Calu3 (cell line): ENCODE measurements at regions of chr5 and their contacts with region 1.

Region 1: GRCh38 chr5:159987031-159987674 is 21.8 kb upstream of the TTC1 start:
- DNase-seq: peak; percentile 95
- H3K4me3 Mint-ChIP-seq: peak overlapping the region; percentile 77
- H3K27ac Mint-ChIP-seq: no peak overlapping the region
- H3K4me1 Mint-ChIP-seq: peaks cover 4% of the 10 kb centered on the region
- H3K27me3 Mint-ChIP-seq: peaks cover 11% of the 10 kb centered on the region
- CTCF ChIP-seq: peak; percentile 83

Region 2: DNA sequence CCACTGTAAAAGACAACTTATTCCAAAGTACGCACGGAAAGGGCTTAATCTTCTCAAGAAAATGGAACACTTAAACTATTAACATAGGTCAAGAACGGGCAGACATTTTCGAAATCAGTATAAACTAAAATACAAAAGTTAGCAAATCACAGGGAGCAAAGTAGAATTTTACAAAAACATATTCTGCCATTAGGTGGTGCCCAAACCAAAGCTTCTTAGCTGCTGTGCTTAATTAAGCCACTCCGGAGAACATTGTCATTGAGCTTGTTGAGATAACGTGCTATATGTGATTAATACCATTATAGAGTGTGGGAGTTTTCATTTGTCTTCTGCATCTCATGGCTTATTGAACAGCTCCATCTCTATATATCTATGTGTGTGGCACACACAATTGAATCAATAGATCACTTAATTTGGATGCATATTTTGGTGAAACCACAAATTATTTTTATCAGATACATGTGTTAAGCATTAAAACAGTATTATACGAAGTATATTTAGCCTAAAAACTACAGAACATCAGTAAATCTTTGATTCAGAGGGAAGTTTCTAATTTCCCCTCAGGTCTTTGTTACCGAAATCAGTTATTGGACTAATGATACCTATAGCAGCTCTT is 700.6 kb before region 1 on chr5:
- CTCF ChIA-PET with region 1: interaction called, 6 read pairs
- intact Hi-C with region 1: loop called (anchors 1 kb)
- DNase-seq: peak; percentile 11
- H3K4me3 Mint-ChIP-seq: no peak overlapping the region
- H3K27ac Mint-ChIP-seq: no peak overlapping the region
- H3K4me1 Mint-ChIP-seq: no peaks in the 10 kb centered on the region
- H3K27me3 Mint-ChIP-seq: no peaks in the 10 kb centered on the region
- CTCF ChIP-seq: no peak

Region 3: GRCh38 chr5:159444441-159445082 is 542.6 kb before region 1 on chr5:
- CTCF ChIA-PET with region 1: interaction called, 21 read pairs
- intact Hi-C with region 1: loop called (anchors 1 kb)
- DNase-seq: peak; percentile 24
- H3K4me3 Mint-ChIP-seq: no peak overlapping the region
- H3K27ac Mint-ChIP-seq: no peak overlapping the region
- H3K4me1 Mint-ChIP-seq: peaks cover 21% of the 10 kb centered on the region
- H3K27me3 Mint-ChIP-seq: peaks cover 1% of the 10 kb centered on the region
- CTCF ChIP-seq: no peak

Region 4: GRCh38 chr5:159581502-159582249 is 405.5 kb before region 1 on chr5:
- CTCF ChIA-PET with region 1: interaction called, 13 read pairs
- intact Hi-C with region 1: loop called (anchors 5 kb)
- DNase-seq: peak; percentile 85
- H3K4me3 Mint-ChIP-seq: no peak overlapping the region
- H3K27ac Mint-ChIP-seq: peak overlapping the region; percentile 79
- H3K4me1 Mint-ChIP-seq: peaks cover 37% of the 10 kb centered on the region
- H3K27me3 Mint-ChIP-seq: no peaks in the 10 kb centered on the region
- CTCF ChIP-seq: no peak

Region 5: GRCh38 chr5:159773062-159773924 is 213.9 kb before region 1 on chr5:
- CTCF ChIA-PET with region 1: interaction called, 4 read pairs
- intact Hi-C with region 1: loop called (anchors 10 kb)
- DNase-seq: peak; percentile 77
- H3K4me3 Mint-ChIP-seq: peak overlapping the region; percentile 64
- H3K27ac Mint-ChIP-seq: peak overlapping the region; percentile 67
- H3K4me1 Mint-ChIP-seq: peaks cover 21% of the 10 kb centered on the region
- H3K27me3 Mint-ChIP-seq: peaks cover 3% of the 10 kb centered on the region
- CTCF ChIP-seq: peak; percentile 48